Activated T-helper 1 cell treated with anti-CD3 and anti-CD28 coated beads, Interleukin-12 subunit alpha, Interleukin-12 subunit beta, Interleukin-2, Interleukin-4 antibody, amounts not matched to agents 30 ng/mL and 10 ng/mL and 1 ng/mL, durations not matched to agents 14 hours and 24 hours and 36 hours (primary cell): ENCODE measurements at regions of chr5 and their contacts with region 1.

Region 1: GRCh38 chr5:115209279-115209678 is 39.6 kb upstream of the TRIM36 start:
- DNase-seq: peak; percentile 59
- H3K4me3 Mint-ChIP-seq: no peak overlapping the region
- H3K27ac Mint-ChIP-seq: peak overlapping the region; percentile 28
- H3K4me1 Mint-ChIP-seq: peaks cover 17% of the 10 kb centered on the region
- H3K27me3 Mint-ChIP-seq: no peaks in the 10 kb centered on the region

Region 2: GRCh38 chr5:115069087-115069968 is 140.0 kb before region 1 on chr5:
- intact Hi-C with region 1: loop called (anchors 2 kb)
- DNase-seq: no peak
- H3K4me3 Mint-ChIP-seq: no peak overlapping the region
- H3K27ac Mint-ChIP-seq: no peak overlapping the region
- H3K4me1 Mint-ChIP-seq: peaks cover 15% of the 10 kb centered on the region
- H3K27me3 Mint-ChIP-seq: peaks cover 16% of the 10 kb centered on the region

Region 3: DNA sequence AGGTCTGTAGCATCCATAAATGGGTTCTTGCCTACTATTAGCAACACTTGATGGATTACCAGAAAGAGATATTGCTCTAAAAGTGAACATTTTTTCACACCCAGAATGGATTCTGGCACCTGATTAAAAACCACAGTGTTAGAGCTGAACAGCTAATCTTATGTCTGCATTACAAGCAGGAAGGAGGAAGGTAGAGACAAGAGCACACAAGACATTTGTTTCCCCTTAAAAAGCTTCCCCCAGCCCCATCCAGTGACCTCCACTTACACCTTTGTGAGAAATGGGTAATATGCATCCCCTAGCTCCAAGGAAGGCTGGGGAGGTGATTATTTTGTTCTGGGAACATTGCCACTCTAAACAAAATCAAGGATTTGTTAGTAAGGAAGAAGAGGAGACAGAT is 27.5 kb before region 1 on chr5:
- intact Hi-C with region 1: loop called (anchors 1 kb)
- DNase-seq: no peak
- H3K4me3 Mint-ChIP-seq: no peak overlapping the region
- H3K27ac Mint-ChIP-seq: no peak overlapping the region
- H3K4me1 Mint-ChIP-seq: peaks cover 10% of the 10 kb centered on the region
- H3K27me3 Mint-ChIP-seq: peaks cover 78% of the 10 kb centered on the region

Region 4: GRCh38 chr5:115246361-115246991 is 37.2 kb after region 1 on chr5:
- intact Hi-C with region 1: loop called (anchors 1 kb)
- DNase-seq: no peak
- H3K4me3 Mint-ChIP-seq: no peak overlapping the region
- H3K27ac Mint-ChIP-seq: no peak overlapping the region
- H3K4me1 Mint-ChIP-seq: peaks cover 14% of the 10 kb centered on the region
- H3K27me3 Mint-ChIP-seq: no peaks in the 10 kb centered on the region

Region 5: GRCh38 chr5:115460472-115460871 is 251.2 kb after region 1 on chr5:
- intact Hi-C with region 1: loop called (anchors 1 kb)
- DNase-seq: no peak
- H3K4me3 Mint-ChIP-seq: no peak overlapping the region
- H3K27ac Mint-ChIP-seq: no peak overlapping the region
- H3K4me1 Mint-ChIP-seq: peaks cover 4% of the 10 kb centered on the region
- H3K27me3 Mint-ChIP-seq: peaks cover 17% of the 10 kb centered on the region

Region 6: GRCh38 chr5:115616472-115616871 is 407.2 kb after region 1 on chr5:
- intact Hi-C with region 1: no loop called
- DNase-seq: no peak
- H3K4me3 Mint-ChIP-seq: no peak overlapping the region
- H3K27ac Mint-ChIP-seq: no peak overlapping the region
- H3K4me1 Mint-ChIP-seq: peaks cover 8% of the 10 kb centered on the region
- H3K27me3 Mint-ChIP-seq: no peaks in the 10 kb centered on the region